SK-N-SH (cell line): ENCODE measurements at regions of chr22 and their contacts with region 1.

Region 1: GRCh38 chr22:35930933-35931332 is 97.7 kb downstream of the RBFOX2 start:
- DNase-seq: peak; percentile 59
- H3K4me3 ChIP-seq: no peak overlapping the region
- H3K27ac ChIP-seq: no peak overlapping the region; a peak in 1 of 4 replicates
- H3K4me1 ChIP-seq: no peaks in the 10 kb centered on the region; a peak in 1 of 4 replicates
- H3K27me3 ChIP-seq: no peaks in the 10 kb centered on the region
- CTCF ChIP-seq: peak; percentile 81
- EP300 ChIP-seq: no peak
- RAD21 ChIP-seq: peak; percentile 96

Region 2: DNA sequence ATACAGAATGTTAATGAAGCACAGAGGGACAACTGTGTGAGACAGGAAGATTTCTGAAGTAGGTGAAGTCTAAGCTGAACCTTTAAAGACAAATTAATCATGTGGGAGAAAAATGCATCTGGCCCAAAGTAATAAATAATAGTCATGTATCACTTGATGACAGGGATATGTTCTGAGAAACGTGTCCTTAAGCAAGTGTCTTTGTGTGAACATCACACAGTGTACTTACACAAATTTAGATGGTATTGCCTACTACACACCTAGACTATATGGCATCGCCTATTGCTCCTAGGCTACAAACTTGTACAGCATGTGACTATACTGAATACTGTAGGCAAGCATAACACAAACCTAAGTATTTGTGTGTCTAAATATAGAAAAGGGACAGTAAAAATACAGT is 100.6 kb before region 1 on chr22:
- CTCF ChIA-PET with region 1: no interaction called
- POLR2A ChIA-PET with region 1: no interaction called
- DNase-seq: no peak
- H3K4me3 ChIP-seq: no peak overlapping the region
- H3K27ac ChIP-seq: no peak overlapping the region; a peak in 1 of 4 replicates
- H3K4me1 ChIP-seq: peaks cover 13 to 14% of the 10 kb centered on the region in 2 experiments
- H3K27me3 ChIP-seq: no peaks in the 10 kb centered on the region
- CTCF ChIP-seq: no peak
- EP300 ChIP-seq: no peak
- RAD21 ChIP-seq: no peak

Region 3: DNA sequence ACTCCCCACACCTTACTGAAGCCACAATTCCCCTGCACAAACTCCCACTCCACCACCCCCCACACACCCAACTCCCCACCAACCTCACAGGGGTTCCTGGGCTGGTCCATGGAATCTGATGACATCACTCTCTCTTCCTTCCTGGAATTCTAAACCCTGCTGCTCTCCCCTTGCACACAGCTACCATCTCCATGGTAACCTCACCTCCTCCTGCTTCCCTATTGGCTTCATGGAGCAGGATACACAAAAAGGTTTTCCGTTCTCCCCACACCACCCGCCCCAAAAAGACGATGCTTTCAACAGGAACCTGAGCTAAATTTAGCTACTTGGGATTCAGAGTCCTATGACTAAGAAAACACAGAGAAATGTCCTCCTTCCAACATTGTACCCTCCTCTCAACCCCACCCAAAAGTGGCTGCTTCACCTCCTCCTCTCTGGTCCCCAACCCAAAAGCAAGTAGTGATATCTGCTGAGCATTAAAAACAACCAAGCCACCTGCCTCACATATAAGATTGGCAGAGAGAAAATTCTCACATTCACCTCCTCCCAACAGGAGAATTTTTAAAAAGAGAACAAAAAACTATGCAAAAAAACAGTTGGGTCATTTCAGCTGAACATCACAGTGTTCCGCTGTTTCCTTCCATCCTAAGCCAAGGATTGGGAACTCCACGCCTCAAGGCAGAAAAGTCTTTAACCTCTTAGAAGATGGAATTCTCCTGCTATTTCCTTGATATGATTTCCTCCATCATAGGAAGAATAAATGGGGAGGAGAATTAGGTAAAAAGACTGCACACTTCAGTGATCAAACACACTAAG is 30.8 kb after region 1 on chr22:
- CTCF ChIA-PET with region 1: interaction called, 39 read pairs
- POLR2A ChIA-PET with region 1: no interaction called
- DNase-seq: peak; percentile 58
- H3K4me3 ChIP-seq: peak overlapping the region; percentile 33 to 50
- H3K27ac ChIP-seq: peak overlapping the region; percentile 85 to 93
- H3K4me1 ChIP-seq: peaks cover 49 to 62% of the 10 kb centered on the region in 2 experiments
- H3K27me3 ChIP-seq: no peaks in the 10 kb centered on the region
- CTCF ChIP-seq: no peak
- EP300 ChIP-seq: peak in 1 of 2 experiments; percentile 49; a peak in 1 of 4 replicates
- RAD21 ChIP-seq: no peak

Region 4: DNA sequence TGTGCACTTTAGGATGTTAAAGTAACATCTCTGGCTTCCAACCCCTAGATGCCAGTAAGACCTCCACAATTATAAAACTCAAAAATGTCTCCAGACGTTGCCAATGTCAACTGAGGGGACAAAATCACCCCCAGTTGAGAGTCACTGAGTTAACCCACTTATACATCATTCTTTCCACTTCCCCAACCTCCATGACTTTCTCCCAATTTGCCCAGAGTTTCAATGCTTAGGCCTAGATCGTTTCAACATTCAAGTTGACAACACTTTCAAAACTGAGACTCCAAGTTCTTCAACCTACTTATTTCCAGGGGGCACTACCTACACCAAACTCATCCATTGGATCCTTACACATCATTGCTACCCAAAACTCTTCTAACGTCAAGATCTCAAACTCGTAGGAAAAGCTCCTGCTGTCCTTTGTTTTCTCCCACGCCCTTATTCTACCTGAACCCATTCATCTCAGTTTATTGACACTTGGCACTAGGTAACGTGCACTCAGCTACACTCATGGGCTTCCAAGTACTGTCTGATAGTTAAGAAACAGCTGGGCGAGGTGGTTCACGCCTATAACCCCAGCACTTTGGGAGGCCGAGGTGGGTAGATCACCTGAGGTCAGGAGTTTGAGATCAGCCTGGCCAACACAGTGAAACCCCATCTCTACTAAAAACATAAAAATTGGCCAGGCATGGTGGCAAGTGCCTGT is 73.2 kb after region 1 on chr22:
- CTCF ChIA-PET with region 1: interaction called, 25 read pairs
- POLR2A ChIA-PET with region 1: no interaction called
- DNase-seq: no peak
- H3K4me3 ChIP-seq: no peak overlapping the region
- H3K27ac ChIP-seq: no peak overlapping the region
- H3K4me1 ChIP-seq: peaks cover 10 to 18% of the 10 kb centered on the region in 2 experiments; a peak in 3 of 4 replicates
- H3K27me3 ChIP-seq: no peaks in the 10 kb centered on the region
- CTCF ChIP-seq: no peak
- EP300 ChIP-seq: no peak
- RAD21 ChIP-seq: no peak

Region 5: DNA sequence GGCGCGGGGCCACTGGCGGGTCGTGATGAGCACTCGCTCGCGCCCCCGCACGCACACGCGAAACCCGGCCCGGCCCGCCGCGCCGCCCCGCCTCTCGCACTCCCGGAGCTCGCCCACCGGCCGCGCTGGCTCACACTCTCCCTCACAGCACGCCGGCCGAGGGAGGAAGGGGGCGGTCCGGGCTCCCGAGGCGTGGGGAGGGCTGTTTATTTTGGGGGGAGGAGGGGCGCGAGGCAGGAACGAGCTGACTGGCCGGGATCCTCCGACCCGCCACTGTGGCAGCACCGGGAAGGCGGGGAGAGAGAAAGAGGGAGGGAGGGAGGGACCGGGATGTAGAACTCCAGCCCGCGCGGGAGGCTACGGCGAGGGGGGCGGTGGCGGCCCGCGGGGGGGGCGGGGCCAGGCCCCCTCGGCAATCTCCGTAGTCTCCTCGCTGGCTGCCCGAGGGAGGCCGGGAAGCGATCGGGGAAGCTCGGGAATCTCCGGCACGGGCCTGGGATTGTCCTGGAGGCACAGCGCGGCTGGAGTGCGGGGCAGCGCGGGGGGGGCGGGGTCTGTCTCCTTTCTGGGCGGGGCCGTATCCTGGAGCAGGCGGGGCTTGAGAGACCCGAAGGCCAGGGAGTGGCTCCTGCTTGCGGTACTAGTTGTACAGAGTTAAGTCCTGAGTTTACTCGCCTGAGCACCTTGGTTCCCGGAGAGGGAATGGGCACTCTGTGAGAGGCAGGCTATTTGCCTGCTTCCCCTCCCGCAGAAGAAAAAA is 97.9 kb after region 1 on chr22 and contains the start of gene RBFOX2:
- CTCF ChIA-PET with region 1: interaction called, 35 read pairs
- POLR2A ChIA-PET with region 1: interaction called, 3 read pairs
- DNase-seq: peak; percentile 98
- H3K4me3 ChIP-seq: peak within 1 kb of the TSS; percentile 74 to 80
- H3K27ac ChIP-seq: peak within 1 kb of the TSS; percentile 75 to 90
- H3K4me1 ChIP-seq: peaks cover 3 to 10% of the 10 kb centered on the region in 2 experiments; a peak in 3 of 4 replicates
- H3K27me3 ChIP-seq: no peaks in the 10 kb centered on the region
- CTCF ChIP-seq: no peak
- EP300 ChIP-seq: no peak; a peak in 1 of 4 replicates
- RAD21 ChIP-seq: no peak; the same call in 1 of the 2 replicates
- polyA plus RNA-seq, gene RBFOX2: 115 and 151 TPM in 2 replicates

Region 6: DNA sequence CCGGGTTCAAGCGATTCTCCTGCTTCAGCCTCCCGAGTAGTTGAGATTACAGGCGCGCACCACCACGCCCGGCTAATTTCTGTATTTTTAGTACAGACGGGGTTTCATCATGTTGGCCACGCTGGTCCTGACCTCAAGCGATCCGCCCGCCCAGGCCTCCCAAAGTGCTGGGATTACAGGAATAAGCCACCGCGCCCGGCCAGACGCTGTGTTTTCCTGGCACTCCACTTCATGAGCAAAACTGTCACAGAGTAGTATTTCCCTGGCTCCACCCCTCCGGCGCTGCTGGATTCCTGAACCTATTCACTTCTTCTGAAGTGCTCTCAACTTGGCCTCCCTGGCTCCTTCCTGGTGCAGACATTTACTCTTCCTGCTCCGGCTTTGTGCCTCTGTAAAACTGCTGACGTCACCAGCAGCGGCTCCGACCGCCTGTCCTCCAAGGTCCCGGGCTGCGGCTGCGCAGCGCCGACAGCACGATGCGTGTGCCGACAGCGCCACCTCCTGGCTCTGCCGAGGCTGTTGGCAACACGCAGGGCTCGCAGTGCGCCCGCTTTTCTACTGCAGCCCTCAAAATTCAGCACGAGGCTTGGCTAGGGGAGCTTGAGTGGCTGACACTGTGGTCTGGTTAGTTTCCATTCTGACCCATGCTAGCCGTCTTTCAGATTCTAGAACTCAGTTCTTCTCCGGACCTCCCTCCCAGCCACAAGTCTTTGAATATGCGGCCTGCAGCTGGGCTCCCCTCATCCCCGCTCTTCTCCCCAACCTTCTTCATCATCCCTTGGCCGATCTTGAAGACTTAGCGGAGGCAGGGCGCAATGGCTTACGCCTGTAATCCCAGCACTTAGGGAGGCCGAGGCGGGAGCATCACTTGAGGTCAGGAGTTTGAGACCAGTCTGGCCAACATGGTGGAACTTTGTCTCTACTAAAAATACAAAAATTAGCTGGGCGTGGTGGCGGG is 193.0 kb after region 1 on chr22:
- CTCF ChIA-PET with region 1: interaction called, 43 read pairs
- POLR2A ChIA-PET with region 1: no interaction called
- DNase-seq: peak; percentile 92
- H3K4me3 ChIP-seq: no peak overlapping the region; a peak in 1 of 4 replicates
- H3K27ac ChIP-seq: peak overlapping the region; percentile 34 to 60; a peak in 2 of 4 replicates
- H3K4me1 ChIP-seq: peaks cover 0 to 3% of the 10 kb centered on the region in 2 experiments; a peak in 1 of 4 replicates
- H3K27me3 ChIP-seq: no peaks in the 10 kb centered on the region; the same call in 1 of the 2 replicates
- CTCF ChIP-seq: peak; percentile 95
- EP300 ChIP-seq: no peak
- RAD21 ChIP-seq: peak; percentile 100